Aorta (tissue), 5 donors: ENCODE measurements at regions of chr17 and their contacts with region 1.

Region 1: DNA sequence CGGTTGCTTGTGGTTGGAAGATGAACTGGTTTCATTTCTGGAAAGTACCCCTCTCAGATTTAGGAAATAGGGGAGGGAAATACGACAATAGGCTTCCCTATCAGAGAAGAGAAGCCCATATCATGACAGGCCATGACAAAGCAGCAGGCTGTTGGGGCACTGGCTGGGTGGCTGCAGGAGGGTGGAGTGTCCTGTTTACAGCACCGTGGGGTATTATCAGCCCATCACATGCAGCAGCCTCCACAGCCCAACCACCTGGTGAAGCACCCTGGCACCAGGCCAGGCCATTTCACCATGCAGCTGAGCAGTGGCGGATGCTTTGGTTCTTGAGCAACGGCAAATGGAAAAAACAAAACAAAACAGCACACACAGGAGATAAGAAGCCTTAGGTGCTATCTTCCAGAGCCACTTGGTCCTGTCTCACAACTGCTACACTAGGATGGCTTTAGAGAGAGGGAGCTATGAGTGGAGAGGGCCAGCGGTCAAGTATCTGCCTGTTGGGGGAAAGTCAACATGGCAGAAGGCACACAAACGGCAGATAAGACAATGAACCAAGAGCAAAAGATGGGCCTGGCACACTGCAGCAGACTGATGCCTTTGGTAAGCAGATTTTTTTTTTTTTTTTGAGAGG is 24.2 kb downstream of the FAM117A start:
- DNase-seq: peak; percentile 83 to 90
- ATAC-seq: peak; percentile 61
- H3K4me3 ChIP-seq: no peak overlapping the region
- H3K27ac ChIP-seq: peak overlapping the region in 1 of 2 donors; percentile 47
- H3K4me1 ChIP-seq: peaks cover 3 to 4% of the 10 kb centered on the region in 2 donors
- H3K27me3 ChIP-seq: no peaks in the 10 kb centered on the region

Region 2: DNA sequence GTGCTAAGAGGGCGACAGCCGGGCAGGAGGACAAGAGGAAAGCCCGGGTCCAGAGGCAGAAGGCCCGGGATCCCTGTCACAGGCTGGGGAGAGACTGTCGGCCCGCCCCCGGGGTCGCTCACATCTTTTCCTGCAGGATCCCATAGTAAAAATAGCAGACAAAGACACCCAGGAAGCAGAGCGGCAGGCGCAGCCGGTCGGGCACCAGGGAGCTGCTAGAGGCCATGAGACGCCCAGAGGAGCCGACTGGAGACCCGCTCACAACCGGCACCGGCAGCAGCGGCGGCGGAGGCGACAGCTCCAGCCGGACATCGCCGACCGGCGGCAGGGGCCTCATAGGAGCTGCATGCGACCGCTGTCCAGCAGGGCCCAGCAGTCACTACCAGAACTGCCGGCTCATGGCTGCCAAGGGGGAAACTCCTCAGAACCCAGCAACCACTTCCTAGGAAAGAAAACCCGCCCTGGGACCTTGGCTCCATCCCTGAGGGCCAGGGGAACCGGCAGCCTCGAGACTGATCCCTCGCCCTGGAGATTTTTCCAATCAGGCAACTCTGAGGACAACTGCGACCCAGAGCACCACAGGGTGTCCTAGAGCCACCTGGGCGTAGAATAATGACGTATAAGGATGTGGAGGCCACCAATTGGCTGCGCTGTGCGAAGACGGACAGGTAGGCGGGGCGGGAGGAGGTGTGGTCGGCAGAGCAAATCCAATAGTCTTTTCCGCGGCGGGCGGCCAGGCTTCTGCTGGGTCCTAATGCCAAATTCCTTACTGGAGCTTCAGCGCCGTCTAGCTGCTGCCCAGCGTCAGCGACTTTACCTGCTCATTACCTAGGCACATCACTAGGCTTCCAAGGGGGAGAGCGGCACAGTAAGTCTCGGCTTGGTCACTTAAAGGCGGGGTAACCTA is 31.9 kb before region 1 on chr17 and contains the start of gene SLC35B1:
- intact Hi-C with region 1: no loop called
- DNase-seq: peak; percentile 99 to 100
- ATAC-seq: peak; percentile 99
- H3K4me3 ChIP-seq: peak within 1 kb of the TSS; percentile 45 to 80
- H3K27ac ChIP-seq: peak within 1 kb of the TSS in 1 of 2 donors; percentile 53
- H3K4me1 ChIP-seq: no peaks in the 10 kb centered on the region
- H3K27me3 ChIP-seq: no peaks in the 10 kb centered on the region
- total RNA-seq, gene SLC35B1: 31.5 to 43.7 TPM

Region 3: GRCh38 chr17:49763735-49764558 is 24.2 kb after region 1 on chr17 and contains the start of gene FAM117A:
- intact Hi-C with region 1: no loop called
- DNase-seq: peak; percentile 95 to 97
- ATAC-seq: peak; percentile 98
- H3K4me3 ChIP-seq: peak within 1 kb of the TSS; percentile 92 to 94
- H3K27ac ChIP-seq: no peak within 1 kb of the TSS
- H3K4me1 ChIP-seq: no peaks in the 10 kb centered on the region
- H3K27me3 ChIP-seq: no peaks in the 10 kb centered on the region
- total RNA-seq, gene FAM117A: 16.9 to 17.2 TPM

Region 4: GRCh38 chr17:49779739-49780231 is 40.0 kb after region 1 on chr17:
- intact Hi-C with region 1: loop called in 1 of 2 experiments (anchors 5 kb)
- DNase-seq: no peak
- ATAC-seq: peak; percentile 72
- H3K4me3 ChIP-seq: no peak overlapping the region
- H3K27ac ChIP-seq: peak overlapping the region in 1 of 2 donors; percentile 46
- H3K4me1 ChIP-seq: peaks cover 5 to 10% of the 10 kb centered on the region in 2 donors
- H3K27me3 ChIP-seq: no peaks in the 10 kb centered on the region